ENCODE measurements at regions of chr9 and their contacts with region 1.

Region 1: DNA sequence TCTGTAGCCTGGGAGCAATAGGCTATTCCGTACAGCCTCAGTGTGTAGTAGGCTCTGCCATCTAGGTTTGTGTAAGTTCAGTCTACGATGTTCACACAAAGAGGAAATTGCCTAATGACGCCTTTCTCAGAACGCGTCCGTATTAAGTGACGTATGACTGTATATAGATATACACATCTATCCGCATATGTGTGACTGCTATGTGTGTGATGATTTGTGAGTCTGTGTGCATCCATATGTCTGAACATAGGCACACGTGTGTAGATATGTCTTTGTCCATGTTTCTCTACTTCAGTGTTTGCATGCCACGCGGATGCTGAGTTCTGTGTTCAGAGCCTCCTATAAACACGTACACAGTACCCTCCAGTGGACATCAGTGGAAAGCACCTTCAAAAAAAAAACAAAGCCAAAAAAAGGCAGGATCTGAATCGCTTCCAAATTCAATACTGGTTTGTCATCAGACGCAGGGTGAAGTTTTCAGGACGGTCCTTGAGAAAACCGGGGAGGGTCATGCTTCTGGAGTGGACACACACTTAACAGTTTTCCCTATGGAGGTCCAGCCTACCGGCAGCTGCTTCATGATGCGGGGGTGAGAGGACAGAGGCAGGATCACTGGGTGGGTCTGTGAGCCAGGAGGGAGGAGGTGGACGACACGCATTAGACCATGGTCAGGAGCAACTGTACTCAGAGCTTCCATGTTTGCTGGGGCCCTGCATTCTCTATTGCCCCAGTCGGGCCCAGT is 29.5 kb upstream of the ALDH1B1 start:
- DNase-seq: peak; percentile 36
- ATAC-seq: peak; percentile 67
- H3K4me3 ChIP-seq: peak overlapping the region in 1 of 2 experiments; percentile 5; a peak in 1 of 4 replicates
- H3K27ac ChIP-seq: no peak overlapping the region
- H3K4me1 ChIP-seq: peaks cover 2% of the 10 kb centered on the region; the same call in 1 of the 2 replicates
- H3K27me3 ChIP-seq: no peaks in the 10 kb centered on the region
- CTCF ChIP-seq: peak; percentile 70

Region 2: GRCh38 chr9:38091310-38092199 is 271.5 kb before region 1 on chr9:
- CTCF ChIA-PET with region 1: no interaction called
- POLR2A ChIA-PET with region 1: no interaction called
- in situ Hi-C with region 1: no loop called
- intact Hi-C with region 1: loop called (anchors 10 kb)
- DNase-seq: no peak
- ATAC-seq: no peak
- H3K4me3 ChIP-seq: no peak overlapping the region
- H3K27ac ChIP-seq: no peak overlapping the region
- H3K4me1 ChIP-seq: no peaks in the 10 kb centered on the region
- H3K27me3 ChIP-seq: no peaks in the 10 kb centered on the region
- CTCF ChIP-seq: no peak

Measured in Panc1 (cell line).